Activated CD4-positive, alpha-beta memory T cell treated with anti-CD3 and anti-CD28 coated beads for 36 hours (primary cell): ENCODE measurements at regions of chr17 and their contacts with region 1.

Region 1: DNA sequence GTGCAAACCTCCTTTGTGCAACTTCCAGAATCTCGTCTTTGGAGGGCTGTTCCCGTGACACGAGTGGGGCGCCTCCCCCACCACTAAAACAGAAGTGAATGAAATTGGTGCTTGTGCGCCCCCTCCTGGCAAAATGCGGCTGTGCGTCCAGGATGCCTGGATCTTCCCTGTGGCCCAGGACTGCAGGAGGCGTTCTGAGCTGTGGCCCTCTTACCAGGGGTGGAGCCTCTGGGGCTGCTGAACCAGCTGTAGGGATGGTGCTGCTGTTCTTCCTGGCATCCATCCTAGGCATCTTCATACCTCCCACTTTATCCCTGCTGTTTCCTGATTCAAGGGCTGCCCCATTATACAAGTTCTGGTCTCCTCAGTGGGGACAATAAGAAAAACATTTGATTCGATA is 18.5 kb upstream of the NAGLU start:
- DNase-seq: peak; percentile 88
- H3K4me3 Mint-ChIP-seq: no peak overlapping the region
- H3K27ac Mint-ChIP-seq: no peak overlapping the region
- H3K4me1 Mint-ChIP-seq: no peaks in the 10 kb centered on the region
- H3K27me3 Mint-ChIP-seq: no peaks in the 10 kb centered on the region

Region 2: DNA sequence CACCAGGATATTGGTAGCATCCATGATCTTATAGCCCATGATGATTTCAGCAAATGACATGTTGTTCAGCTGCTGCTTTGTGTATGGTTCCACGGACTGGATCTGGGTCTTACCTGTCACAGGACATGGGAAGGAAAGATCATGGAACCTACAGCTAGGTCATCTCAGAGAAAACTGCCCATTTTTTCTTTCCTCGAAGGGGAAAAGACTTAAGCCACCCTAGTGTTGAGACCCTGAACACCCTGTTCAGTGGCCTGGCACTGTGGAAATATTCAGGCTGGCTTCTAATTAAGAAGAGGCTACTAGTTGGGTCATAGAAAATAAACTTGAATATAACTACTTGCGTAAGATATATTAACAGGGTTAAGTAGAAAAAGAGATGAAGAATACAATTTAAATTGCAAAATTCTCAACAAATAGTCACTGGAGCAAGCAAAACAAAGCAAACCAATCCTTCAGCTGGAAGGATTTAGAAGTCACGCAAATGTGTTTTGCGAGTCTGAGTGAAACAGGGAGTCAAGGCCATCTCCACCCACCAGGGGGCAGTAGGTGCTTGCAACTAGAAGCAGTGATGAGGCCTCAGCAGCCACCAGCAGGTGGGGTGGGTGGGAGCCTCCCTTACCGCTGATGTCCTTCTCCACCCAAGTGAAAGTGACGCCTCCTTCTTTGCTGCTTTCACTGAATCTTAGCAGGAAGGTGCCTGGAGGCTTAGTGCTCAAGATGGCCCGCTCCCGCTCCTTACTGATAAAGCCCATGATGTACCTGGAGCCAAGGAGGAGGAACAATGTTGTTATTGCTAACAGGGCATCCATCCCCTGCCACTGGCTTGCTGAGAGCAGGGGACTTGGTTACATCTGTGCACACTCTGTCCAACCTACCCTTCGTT is 194.9 kb before region 1 on chr17:
- CTCF ChIA-PET with region 1: interaction called, 10 read pairs
- POLR2A ChIA-PET with region 1: no interaction called
- intact Hi-C with region 1: loop called (anchors 5 kb)
- DNase-seq: peak; percentile 96
- H3K4me3 Mint-ChIP-seq: no peak overlapping the region
- H3K27ac Mint-ChIP-seq: peak overlapping the region; percentile 67
- H3K4me1 Mint-ChIP-seq: peaks cover 37% of the 10 kb centered on the region
- H3K27me3 Mint-ChIP-seq: no peaks in the 10 kb centered on the region

Region 3: GRCh38 chr17:42373896-42374295 is 143.6 kb before region 1 on chr17:
- CTCF ChIA-PET with region 1: no interaction called
- POLR2A ChIA-PET with region 1: no interaction called
- intact Hi-C with region 1: no loop called
- DNase-seq: no peak
- H3K4me3 Mint-ChIP-seq: no peak overlapping the region
- H3K27ac Mint-ChIP-seq: peak overlapping the region; percentile 51
- H3K4me1 Mint-ChIP-seq: peaks cover 56% of the 10 kb centered on the region
- H3K27me3 Mint-ChIP-seq: no peaks in the 10 kb centered on the region

Region 4: GRCh38 chr17:42428141-42428944 is 89.2 kb before region 1 on chr17:
- CTCF ChIA-PET with region 1: interaction called, 29 read pairs
- POLR2A ChIA-PET with region 1: interaction called, 3 read pairs
- intact Hi-C with region 1: loop called (anchors 2 kb)
- DNase-seq: peak; percentile 44
- H3K4me3 Mint-ChIP-seq: no peak overlapping the region
- H3K27ac Mint-ChIP-seq: no peak overlapping the region
- H3K4me1 Mint-ChIP-seq: no peaks in the 10 kb centered on the region
- H3K27me3 Mint-ChIP-seq: peaks cover 11% of the 10 kb centered on the region

Region 5: GRCh38 chr17:42459256-42459800 is 58.2 kb before region 1 on chr17:
- CTCF ChIA-PET with region 1: interaction called, 3 read pairs
- POLR2A ChIA-PET with region 1: no interaction called
- intact Hi-C with region 1: loop called (anchors 5 kb)
- DNase-seq: peak; percentile 59
- H3K4me3 Mint-ChIP-seq: peak overlapping the region; percentile 92
- H3K27ac Mint-ChIP-seq: no peak overlapping the region
- H3K4me1 Mint-ChIP-seq: peaks cover 41% of the 10 kb centered on the region
- H3K27me3 Mint-ChIP-seq: no peaks in the 10 kb centered on the region